Motor neuron (in vitro differentiated cells): ENCODE measurements at regions of chr5 and their contacts with region 1.

Region 1: GRCh38 chr5:180090098-180090768 is 18.7 kb upstream of the RNF130 start:
- ATAC-seq: peak; percentile 75 to 96 (median 82)
- H3K4me3 ChIP-seq: peak overlapping the region; percentile 19 to 40 (median 29)
- H3K27ac ChIP-seq: peak overlapping the region; percentile 74
- H3K4me1 ChIP-seq: peaks cover 20 to 21% of the 10 kb centered on the region in 2 donors

Region 2: DNA sequence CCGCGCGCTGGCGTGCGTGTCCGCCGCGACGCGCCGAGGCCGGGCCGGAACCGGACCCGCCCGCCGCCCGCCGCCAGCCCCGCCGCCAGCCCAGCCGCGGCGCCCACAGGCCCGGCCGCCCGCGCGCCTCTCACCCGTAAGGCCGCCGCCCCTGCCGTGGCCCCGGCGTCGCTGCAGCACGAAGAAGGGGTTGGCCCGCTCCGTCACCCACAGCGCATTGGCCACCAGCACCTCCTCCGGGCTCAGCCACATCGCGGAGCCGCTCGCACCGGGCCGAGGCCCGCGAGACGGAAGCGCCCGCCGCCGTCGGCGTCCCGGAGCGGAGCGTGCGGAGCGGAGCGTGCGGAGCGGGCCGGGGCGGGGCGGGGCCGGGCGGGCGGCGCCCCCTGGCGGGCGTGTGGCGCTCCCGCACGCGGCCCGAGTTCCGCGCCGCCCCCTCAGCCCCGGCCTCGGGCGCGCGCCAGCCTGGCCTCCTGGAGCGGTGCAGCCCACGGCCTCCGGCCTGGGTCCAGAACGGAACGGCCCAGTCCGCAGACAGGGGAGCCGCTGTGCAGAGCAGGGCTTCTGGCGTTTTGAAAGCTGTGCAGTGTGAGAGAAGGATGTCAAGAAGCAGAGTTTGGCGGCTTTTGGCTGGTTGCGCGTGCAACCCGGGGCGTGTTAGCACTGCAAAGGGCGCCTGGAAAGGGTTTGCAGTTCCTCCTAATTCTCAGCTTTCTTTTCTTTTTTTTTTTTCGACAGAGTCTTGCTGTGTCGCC is 182.5 kb before region 1 on chr5 and contains the start of gene TBC1D9B:
- in situ Hi-C with region 1: loop called in 1 of 9 experiments (anchors 25 kb)
- ATAC-seq: peak; percentile 86 to 95 (median 92)
- H3K4me3 ChIP-seq: peak within 1 kb of the TSS; percentile 61 to 93 (median 66)
- H3K27ac ChIP-seq: peak within 1 kb of the TSS; percentile 37 to 74
- H3K4me1 ChIP-seq: peaks cover 7% of the 10 kb centered on the region in 2 donors
- total RNA-seq, gene TBC1D9B: 29.6 to 103 (median 49.0) TPM

Region 3: GRCh38 chr5:180739271-180739670 is 649.0 kb after region 1 on chr5:
- in situ Hi-C with region 1: no loop called
- ATAC-seq: no peak
- H3K4me3 ChIP-seq: no peak overlapping the region
- H3K27ac ChIP-seq: no peak overlapping the region
- H3K4me1 ChIP-seq: no peaks in the 10 kb centered on the region